Activated CD4-positive, alpha-beta T cell treated with anti-CD3 and anti-CD28 coated beads, Interleukin-2, amount 10 ng/mL, durations not matched to agents 7 days and 5 days (primary cell): ENCODE measurements at regions of chr3 and their contacts with region 1.

Region 1: DNA sequence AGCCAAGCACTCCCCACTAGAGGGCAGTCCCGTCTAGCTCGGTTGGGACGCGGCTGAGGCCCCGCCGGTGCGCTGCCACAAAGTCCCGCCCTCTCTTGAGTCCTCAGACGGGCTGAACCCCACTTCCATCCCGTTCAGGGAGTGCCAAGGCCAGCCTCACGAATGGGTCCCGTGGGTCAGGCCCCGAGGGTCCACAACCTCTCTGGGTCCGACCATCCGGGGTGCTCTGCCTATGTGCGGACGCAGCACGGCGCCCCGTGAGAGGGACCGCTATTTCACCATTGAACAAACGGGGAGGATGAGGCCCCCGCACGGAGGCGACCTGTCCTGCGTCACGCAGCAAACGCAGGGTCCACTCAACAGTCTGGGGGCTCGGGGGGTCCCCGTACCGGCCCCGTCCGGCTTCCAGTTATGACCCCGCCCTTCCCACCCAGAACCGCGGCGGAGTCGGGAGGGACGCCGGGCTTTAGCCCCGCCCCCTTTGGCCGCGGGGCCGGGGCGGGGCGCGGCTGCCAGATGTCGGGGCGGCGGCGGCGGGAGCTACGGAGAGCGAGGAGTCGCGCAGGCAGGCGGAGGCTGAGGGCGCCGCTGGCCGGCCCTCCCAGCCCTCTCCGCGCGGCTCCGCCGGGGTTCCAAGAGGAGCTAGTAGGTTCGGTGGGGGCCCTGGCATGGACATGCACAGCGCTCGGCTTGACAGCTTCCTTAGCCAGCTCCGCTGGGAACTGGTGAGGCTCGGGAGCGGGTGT is at the start of gene INKA1:
- DNase-seq: peak; percentile 92
- H3K4me3 Mint-ChIP-seq: peak within 1 kb of the TSS; percentile 78
- H3K27ac Mint-ChIP-seq: peak within 1 kb of the TSS; percentile 62
- H3K4me1 Mint-ChIP-seq: peaks cover 32% of the 10 kb centered on the region
- H3K27me3 Mint-ChIP-seq: peaks cover 14% of the 10 kb centered on the region
- total RNA-seq, gene INKA1: 0.46 to 0.60 TPM

Region 2: GRCh38 chr3:49786241-49786958 is 16.5 kb before region 1 on chr3 and contains the start of gene IP6K1:
- CTCF ChIA-PET with region 1: interaction called, 13 read pairs
- POLR2A ChIA-PET with region 1: no interaction called
- DNase-seq: peak; percentile 100
- H3K4me3 Mint-ChIP-seq: peak within 1 kb of the TSS; percentile 87
- H3K27ac Mint-ChIP-seq: peak within 1 kb of the TSS; percentile 99
- H3K4me1 Mint-ChIP-seq: peaks cover 28% of the 10 kb centered on the region
- H3K27me3 Mint-ChIP-seq: peaks cover 6% of the 10 kb centered on the region
- total RNA-seq, gene IP6K1: 35.7 to 38.9 TPM

Region 3: DNA sequence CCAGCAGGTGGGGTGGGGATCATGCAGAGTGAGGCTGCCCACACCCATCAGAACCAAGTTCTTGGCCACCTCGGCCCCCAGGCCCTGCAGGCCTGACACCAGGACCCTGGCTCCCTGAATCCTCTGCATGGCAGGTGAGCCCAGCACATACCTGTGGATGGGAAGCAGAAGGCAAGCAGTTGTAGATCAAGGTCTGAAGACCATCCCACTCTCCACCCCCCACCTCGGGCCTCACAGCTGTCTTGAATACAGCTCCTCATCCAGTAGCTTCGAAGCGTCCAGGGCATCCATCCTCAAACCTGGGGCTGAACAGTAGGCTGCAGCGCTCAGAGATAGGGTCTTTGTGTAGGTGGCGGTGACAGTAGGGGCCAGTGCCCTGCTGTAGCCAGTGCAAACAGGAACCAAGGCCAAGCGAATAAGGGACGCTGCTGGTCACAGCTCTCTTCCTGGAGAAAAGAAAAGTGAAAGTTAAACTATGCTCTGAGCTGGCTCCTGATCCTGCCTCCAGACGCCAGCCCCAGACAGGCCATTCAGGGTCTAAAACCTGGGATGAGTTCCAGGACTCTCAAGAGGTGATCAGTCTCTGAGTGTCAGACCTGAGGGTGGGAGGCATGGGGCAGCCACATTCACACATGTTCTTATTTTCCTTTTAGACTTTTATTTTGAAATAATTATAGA is 10.7 kb after region 1 on chr3 and contains the start of gene UBA7:
- CTCF ChIA-PET with region 1: interaction called, 20 read pairs
- POLR2A ChIA-PET with region 1: interaction called, 4 read pairs
- DNase-seq: peak; percentile 59
- H3K4me3 Mint-ChIP-seq: peak within 1 kb of the TSS; percentile 99
- H3K27ac Mint-ChIP-seq: peak within 1 kb of the TSS; percentile 98
- H3K4me1 Mint-ChIP-seq: peaks cover 39% of the 10 kb centered on the region
- H3K27me3 Mint-ChIP-seq: no peaks in the 10 kb centered on the region
- total RNA-seq, gene UBA7: 249 to 256 TPM

Region 4: GRCh38 chr3:49831341-49831740 is 28.4 kb after region 1 on chr3:
- CTCF ChIA-PET with region 1: interaction called, 13 read pairs
- POLR2A ChIA-PET with region 1: no interaction called
- DNase-seq: no peak
- H3K4me3 Mint-ChIP-seq: no peak overlapping the region
- H3K27ac Mint-ChIP-seq: no peak overlapping the region
- H3K4me1 Mint-ChIP-seq: no peaks in the 10 kb centered on the region
- H3K27me3 Mint-ChIP-seq: no peaks in the 10 kb centered on the region

Region 5: GRCh38 chr3:49839193-49839809 is 36.4 kb after region 1 on chr3:
- CTCF ChIA-PET with region 1: interaction called, 48 read pairs
- POLR2A ChIA-PET with region 1: interaction called, 3 read pairs
- DNase-seq: peak; percentile 85
- H3K4me3 Mint-ChIP-seq: no peak overlapping the region
- H3K27ac Mint-ChIP-seq: no peak overlapping the region
- H3K4me1 Mint-ChIP-seq: peaks cover 1% of the 10 kb centered on the region
- H3K27me3 Mint-ChIP-seq: no peaks in the 10 kb centered on the region

Region 6: GRCh38 chr3:49856181-49857005 is 53.5 kb after region 1 on chr3 and contains the start of gene TRAIP:
- CTCF ChIA-PET with region 1: interaction called, 10 read pairs
- POLR2A ChIA-PET with region 1: no interaction called
- DNase-seq: peak; percentile 96
- H3K4me3 Mint-ChIP-seq: peak within 1 kb of the TSS; percentile 97
- H3K27ac Mint-ChIP-seq: peak within 1 kb of the TSS; percentile 95
- H3K4me1 Mint-ChIP-seq: peaks cover 29% of the 10 kb centered on the region
- H3K27me3 Mint-ChIP-seq: no peaks in the 10 kb centered on the region
- total RNA-seq, gene TRAIP: 30.9 to 31.0 TPM